AG04449 (cell line): ENCODE measurements at regions of chr4 and their contacts with region 1.

Region 1: GRCh38 chr4:4430492-4431197 is 43.7 kb downstream of the NSG1 start:
- DNase-seq: peak; percentile 58
- H3K4me3 ChIP-seq: no peak overlapping the region
- CTCF ChIP-seq: peak; percentile 86

Region 2: DNA sequence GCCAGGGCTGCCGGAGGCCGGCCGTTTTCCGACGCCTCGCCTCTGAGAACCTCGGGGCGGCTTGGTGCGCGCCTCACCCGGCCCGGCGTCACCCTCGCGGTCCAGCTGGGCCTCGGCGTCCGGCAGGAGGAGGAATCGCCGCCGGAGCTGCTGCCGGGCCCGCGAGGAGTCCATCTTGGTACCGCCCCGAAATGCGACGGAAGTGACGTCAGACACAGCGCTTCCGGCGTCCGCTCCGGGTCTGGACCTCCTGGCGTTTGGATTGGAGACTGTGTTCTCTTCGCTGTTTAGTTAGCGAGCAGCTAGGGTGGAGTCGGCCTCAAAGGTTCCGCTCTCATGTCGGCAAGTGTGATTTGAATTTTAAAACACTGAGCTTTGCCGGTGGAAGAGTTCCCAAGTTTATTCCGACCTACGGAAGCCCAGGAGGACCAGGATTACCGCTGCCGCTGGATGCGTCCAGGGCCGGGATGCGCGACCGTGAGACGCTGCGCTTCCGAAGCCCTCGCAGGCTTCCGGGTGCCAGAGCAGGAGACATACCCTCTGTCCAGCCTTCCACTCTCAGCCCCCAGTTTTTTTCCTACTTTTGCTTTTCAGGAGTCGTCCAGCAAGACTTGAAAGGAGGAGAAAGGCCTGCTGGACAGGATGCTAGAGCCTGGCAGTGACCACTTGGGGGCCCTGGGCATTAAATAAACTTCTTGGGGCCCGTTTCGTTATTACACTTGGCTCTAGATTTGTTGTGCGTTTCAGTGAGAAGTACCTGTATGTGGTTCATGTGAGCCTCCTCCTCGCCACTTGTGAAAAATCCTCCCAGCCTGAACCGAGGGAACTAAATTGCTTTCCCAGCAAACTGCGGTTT is 182.4 kb before region 1 on chr4 and contains the start of gene TMEM128:
- CTCF ChIA-PET with region 1: interaction called, 15 read pairs
- POLR2A ChIA-PET with region 1: no interaction called
- DNase-seq: peak; percentile 55
- H3K4me3 ChIP-seq: peak within 1 kb of the TSS; percentile 77
- CTCF ChIP-seq: peak; percentile 3

Region 3: GRCh38 chr4:4418676-4419390 is 11.8 kb before region 1 on chr4:
- CTCF ChIA-PET with region 1: interaction called, 22 read pairs
- POLR2A ChIA-PET with region 1: no interaction called
- DNase-seq: no peak
- H3K4me3 ChIP-seq: no peak overlapping the region
- CTCF ChIP-seq: no peak

Region 4: DNA sequence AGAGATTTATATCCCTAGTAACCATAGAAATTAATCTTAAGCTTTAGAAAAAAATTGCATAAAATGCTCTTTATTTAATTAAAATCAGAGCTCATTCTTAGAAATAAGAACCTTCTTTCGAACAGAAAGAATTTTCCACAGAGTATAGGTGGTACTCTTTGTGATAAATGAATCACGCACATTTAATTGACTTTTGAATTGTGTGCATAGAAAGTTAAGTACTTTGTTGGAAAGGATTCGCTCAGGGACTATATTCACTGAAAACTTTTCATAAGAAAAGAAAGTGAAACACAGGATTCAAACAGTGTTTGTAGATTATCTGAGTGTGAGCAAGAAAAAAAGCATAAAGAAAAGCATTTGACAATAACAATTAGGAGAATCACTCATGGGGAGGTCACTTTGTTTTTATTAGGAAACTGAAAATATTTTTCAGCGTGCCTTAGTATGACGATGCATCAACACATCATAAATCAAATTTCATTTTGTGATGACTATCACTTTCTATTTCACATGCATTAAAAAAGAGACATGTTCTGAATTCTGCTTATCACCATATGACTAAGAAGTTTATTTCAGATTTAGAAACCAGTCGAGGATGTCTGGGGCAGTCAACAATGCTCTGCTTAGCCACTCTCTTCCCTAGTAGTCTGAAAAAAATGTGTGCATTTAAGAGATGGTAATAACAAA is 61.7 kb after region 1 on chr4:
- CTCF ChIA-PET with region 1: no interaction called
- POLR2A ChIA-PET with region 1: no interaction called
- DNase-seq: peak; percentile 9
- H3K4me3 ChIP-seq: peak overlapping the region; percentile 0; the same call in 1 of the 2 replicates
- CTCF ChIP-seq: no peak